A673 (cell line): ENCODE measurements at regions of chrX and their contacts with region 1.

Region 1: DNA sequence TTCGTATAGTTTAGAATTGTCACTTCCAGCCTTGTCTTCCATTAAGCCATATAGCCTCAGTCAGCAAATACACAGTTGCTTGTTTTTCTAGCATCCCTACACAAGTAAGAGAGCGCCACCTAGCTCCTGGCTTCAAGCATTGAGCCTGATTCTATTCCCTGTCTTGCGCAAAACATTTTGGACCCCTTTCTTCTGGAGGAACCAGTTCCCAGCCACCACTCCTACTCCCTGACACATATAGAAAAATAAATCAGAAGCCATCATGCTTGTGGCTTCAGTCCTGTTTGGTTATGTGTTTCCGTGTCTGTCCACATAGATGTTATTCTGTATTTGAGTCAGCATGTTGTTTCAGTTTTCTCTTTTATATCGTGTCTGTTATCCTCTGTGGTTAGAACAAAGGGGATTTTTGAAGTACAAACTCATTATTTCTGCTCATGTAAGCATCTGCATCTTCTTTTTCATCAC is 59.9 kb downstream of the GK start:
- DNase-seq: peak; percentile 76
- H3K4me3 ChIP-seq: no peak overlapping the region
- H3K27ac ChIP-seq: no peak overlapping the region
- H3K4me1 ChIP-seq: no peaks in the 10 kb centered on the region
- H3K27me3 ChIP-seq: no peaks in the 10 kb centered on the region
- CTCF ChIP-seq: peak; percentile 80

Region 2: GRCh38 chrX:30275498-30275897 is 437.6 kb before region 1 on chrX:
- CTCF ChIA-PET with region 1: no interaction called
- POLR2A ChIA-PET with region 1: no interaction called
- intact Hi-C with region 1: loop called (anchors 10 kb)
- DNase-seq: peak; percentile 38
- H3K4me3 ChIP-seq: no peak overlapping the region
- H3K27ac ChIP-seq: no peak overlapping the region
- H3K4me1 ChIP-seq: no peaks in the 10 kb centered on the region
- H3K27me3 ChIP-seq: no peaks in the 10 kb centered on the region
- CTCF ChIP-seq: peak; percentile 60

Region 3: DNA sequence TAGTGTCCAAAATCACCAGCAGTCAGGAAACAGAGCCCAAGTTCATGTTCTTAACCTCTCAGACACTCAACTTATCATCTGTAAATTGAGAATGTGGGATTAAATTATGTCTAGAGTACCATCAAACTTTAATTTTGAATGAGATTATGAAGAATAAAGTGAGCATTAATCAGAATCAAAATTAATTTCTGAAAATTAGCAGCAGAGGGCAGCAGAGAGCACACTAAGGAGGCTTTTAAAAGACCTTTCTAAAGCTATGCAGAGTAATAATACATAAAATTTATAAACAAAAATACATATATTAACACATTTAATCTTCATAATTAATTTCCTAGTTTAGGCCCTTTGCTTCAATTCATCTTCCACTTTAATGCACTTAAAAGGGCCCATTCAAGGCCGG is 142.6 kb before region 1 on chrX:
- CTCF ChIA-PET with region 1: no interaction called
- POLR2A ChIA-PET with region 1: no interaction called
- intact Hi-C with region 1: loop called (anchors 1 kb)
- DNase-seq: peak; percentile 41
- H3K4me3 ChIP-seq: no peak overlapping the region
- H3K27ac ChIP-seq: no peak overlapping the region
- H3K4me1 ChIP-seq: no peaks in the 10 kb centered on the region
- H3K27me3 ChIP-seq: no peaks in the 10 kb centered on the region
- CTCF ChIP-seq: peak; percentile 63

Region 4: GRCh38 chrX:30635630-30636029 is 77.5 kb before region 1 on chrX:
- CTCF ChIA-PET with region 1: interaction called, 5 read pairs
- POLR2A ChIA-PET with region 1: no interaction called
- intact Hi-C with region 1: loop called (anchors 2 kb)
- DNase-seq: no peak
- H3K4me3 ChIP-seq: no peak overlapping the region
- H3K27ac ChIP-seq: no peak overlapping the region
- H3K4me1 ChIP-seq: no peaks in the 10 kb centered on the region
- H3K27me3 ChIP-seq: no peaks in the 10 kb centered on the region
- CTCF ChIP-seq: peak; percentile 55

Region 5: GRCh38 chrX:30971774-30972603 is 258.9 kb after region 1 on chrX:
- CTCF ChIA-PET with region 1: no interaction called
- POLR2A ChIA-PET with region 1: no interaction called
- intact Hi-C with region 1: no loop called
- DNase-seq: peak; percentile 66
- H3K4me3 ChIP-seq: peak overlapping the region; percentile 14
- H3K27ac ChIP-seq: no peak overlapping the region
- H3K4me1 ChIP-seq: no peaks in the 10 kb centered on the region
- H3K27me3 ChIP-seq: no peaks in the 10 kb centered on the region
- CTCF ChIP-seq: peak; percentile 80

Region 6: GRCh38 chrX:32687379-32687778 is 1974.3 kb after region 1 on chrX:
- CTCF ChIA-PET with region 1: no interaction called
- POLR2A ChIA-PET with region 1: interaction called, 10 read pairs
- intact Hi-C with region 1: no loop called
- DNase-seq: peak; percentile 1
- H3K4me3 ChIP-seq: no peak overlapping the region
- H3K27ac ChIP-seq: no peak overlapping the region
- H3K4me1 ChIP-seq: no peaks in the 10 kb centered on the region
- H3K27me3 ChIP-seq: no peaks in the 10 kb centered on the region
- CTCF ChIP-seq: no peak